Panc1 (cell line): ENCODE measurements at regions of chr13 and their contacts with region 1.

Region 1: DNA sequence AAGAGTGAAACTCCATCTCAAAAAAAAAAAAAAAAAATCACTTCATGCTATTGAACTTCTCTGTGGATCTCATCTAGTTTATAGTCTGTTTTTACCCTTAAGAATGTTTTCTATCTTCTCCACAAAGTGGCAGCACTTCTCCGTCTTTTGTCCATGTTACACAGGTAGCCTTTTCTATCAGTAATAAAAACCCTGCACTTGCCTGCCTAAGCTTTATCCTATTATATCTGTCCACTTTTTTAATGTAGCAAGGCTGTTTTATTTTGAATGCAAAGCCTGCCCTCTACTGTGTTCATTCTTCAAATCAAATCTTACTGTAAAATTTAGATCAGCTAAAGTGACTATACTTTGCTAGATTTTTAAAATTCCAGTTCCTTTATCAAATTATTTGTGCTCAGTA is 124.0 kb downstream of the STOML3 start:
- DNase-seq: no peak
- ATAC-seq: no peak
- H3K4me3 ChIP-seq: no peak overlapping the region
- H3K27ac ChIP-seq: no peak overlapping the region
- H3K4me1 ChIP-seq: no peaks in the 10 kb centered on the region
- H3K27me3 ChIP-seq: no peaks in the 10 kb centered on the region
- CTCF ChIP-seq: peak; percentile 18; the same call in 1 of the 2 replicates

Region 2: GRCh38 chr13:38566519-38566918 is 300.1 kb before region 1 on chr13:
- CTCF ChIA-PET with region 1: no interaction called
- POLR2A ChIA-PET with region 1: no interaction called
- in situ Hi-C with region 1: no loop called
- intact Hi-C with region 1: no loop called
- DNase-seq: no peak
- ATAC-seq: no peak
- H3K4me3 ChIP-seq: no peak overlapping the region
- H3K27ac ChIP-seq: no peak overlapping the region
- H3K4me1 ChIP-seq: no peaks in the 10 kb centered on the region
- H3K27me3 ChIP-seq: no peaks in the 10 kb centered on the region
- CTCF ChIP-seq: no peak

Region 3: GRCh38 chr13:38914070-38914469 is 47.4 kb after region 1 on chr13:
- CTCF ChIA-PET with region 1: no interaction called
- POLR2A ChIA-PET with region 1: no interaction called
- in situ Hi-C with region 1: no loop called
- intact Hi-C with region 1: loop called (anchors 2 kb)
- DNase-seq: no peak
- ATAC-seq: no peak
- H3K4me3 ChIP-seq: peak overlapping the region in 1 of 2 experiments; percentile 9; a peak in 1 of 4 replicates
- H3K27ac ChIP-seq: no peak overlapping the region
- H3K4me1 ChIP-seq: no peaks in the 10 kb centered on the region
- H3K27me3 ChIP-seq: no peaks in the 10 kb centered on the region
- CTCF ChIP-seq: no peak